Left lung (tissue), 14 donors: ENCODE measurements at regions of chr14 and their contacts with region 1.

Region 1: DNA sequence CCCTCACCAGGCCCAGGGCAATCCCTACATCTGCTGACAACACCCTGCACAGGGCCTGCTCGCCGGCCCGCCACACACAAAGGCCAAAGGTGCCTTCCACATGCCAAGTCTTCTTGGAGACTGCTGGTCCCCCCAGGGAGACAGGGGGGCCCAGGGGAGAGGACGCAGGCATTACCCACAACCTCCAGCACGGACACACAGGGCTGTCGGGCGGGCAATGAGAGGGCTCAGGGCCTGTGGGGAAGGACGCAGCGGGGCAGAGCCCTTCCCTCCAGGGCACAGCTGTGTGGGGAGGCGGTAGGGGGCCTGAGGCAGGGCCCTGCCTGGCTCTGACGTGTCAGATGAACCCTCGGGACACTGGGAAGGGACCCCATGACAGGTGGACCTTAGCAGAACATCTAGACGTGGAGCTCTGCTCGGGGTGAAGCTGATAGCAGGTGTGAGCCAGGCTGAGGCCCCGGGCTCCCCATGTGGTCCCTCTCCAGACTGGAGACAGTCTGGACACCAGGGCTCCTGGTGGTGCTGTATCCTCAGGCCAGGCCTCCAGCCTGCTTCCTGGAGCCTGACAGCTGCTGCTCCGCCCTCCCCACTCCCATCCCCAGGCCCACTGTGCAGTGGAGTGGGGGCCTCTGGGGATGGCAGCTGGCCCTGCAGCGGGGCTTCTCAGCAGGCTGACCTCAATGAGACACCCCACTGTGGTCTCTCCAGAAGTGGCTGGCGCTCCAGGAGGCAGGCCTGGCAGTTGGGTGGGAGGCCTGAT is 31.6 kb upstream of the NUDT14 start:
- DNase-seq: no peak
- ATAC-seq: no peak
- H3K4me3 ChIP-seq: no peak overlapping the region
- H3K27ac ChIP-seq: no peak overlapping the region
- H3K4me1 ChIP-seq: no peaks in the 10 kb centered on the region
- H3K27me3 ChIP-seq: no peaks in the 10 kb centered on the region
- CTCF ChIP-seq: no peak

Region 2: DNA sequence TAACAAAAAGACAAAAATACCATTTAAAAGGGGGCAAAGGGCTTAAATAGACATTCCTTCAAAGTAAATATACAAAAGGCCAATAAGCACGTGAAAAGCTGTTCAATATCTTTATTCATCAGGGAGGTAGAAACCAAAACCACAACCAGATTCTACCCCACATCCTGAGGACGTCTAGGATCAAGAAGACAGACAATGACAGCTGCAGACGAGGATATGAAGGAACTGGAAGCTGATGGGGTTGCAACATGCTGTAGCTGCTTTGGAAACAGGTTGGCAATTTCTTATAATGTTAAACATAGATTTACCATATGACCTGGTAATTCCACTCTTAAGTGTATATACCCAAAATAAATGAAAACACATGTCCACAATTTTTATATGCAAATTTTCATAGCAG is 718.2 kb before region 1 on chr14:
- intact Hi-C with region 1: no loop called
- DNase-seq: no peak
- ATAC-seq: no peak
- H3K4me3 ChIP-seq: no peak overlapping the region
- H3K27ac ChIP-seq: no peak overlapping the region
- H3K4me1 ChIP-seq: no peaks in the 10 kb centered on the region
- H3K27me3 ChIP-seq: no peaks in the 10 kb centered on the region
- CTCF ChIP-seq: no peak

Region 3: DNA sequence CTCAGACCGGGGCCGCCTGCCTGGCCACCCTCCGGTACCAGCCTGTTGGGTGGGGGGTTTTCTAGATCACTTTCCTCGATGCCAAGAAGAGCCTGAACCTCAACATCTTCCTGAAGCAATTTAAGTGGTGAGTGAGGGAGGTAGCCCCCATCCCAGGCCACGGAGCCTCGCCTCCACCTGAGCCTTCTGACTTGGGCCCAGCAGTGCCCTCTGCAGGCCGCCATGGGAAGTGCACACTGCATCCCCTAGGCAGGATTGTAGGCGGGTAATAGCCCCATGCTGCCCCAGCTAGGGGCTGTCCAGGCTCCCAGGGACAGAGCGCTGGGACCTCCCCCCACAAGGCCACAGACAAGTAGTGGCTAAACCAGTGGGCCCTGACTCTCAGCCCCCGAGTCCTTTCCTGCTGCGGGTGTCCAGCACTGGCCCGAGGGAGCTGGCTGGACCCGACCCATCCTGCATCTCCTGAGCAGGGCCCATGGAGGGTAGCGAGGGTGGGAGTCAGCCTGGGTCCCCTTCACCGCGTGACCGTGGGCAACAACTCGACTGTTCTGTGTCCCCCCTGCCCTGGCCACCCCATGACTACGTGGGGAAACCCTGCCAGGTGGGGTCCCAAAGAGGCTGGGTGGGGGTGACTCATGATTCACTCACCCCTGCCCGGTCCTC is 504.0 kb before region 1 on chr14:
- intact Hi-C with region 1: no loop called
- DNase-seq: peak in 1 of 4 donors; percentile 69
- ATAC-seq: peak; percentile 85
- H3K4me3 ChIP-seq: no peak overlapping the region
- H3K27ac ChIP-seq: no peak overlapping the region
- H3K4me1 ChIP-seq: no peaks in the 10 kb centered on the region
- H3K27me3 ChIP-seq: no peaks in the 10 kb centered on the region
- CTCF ChIP-seq: peak; percentile 94 to 98

Region 4: DNA sequence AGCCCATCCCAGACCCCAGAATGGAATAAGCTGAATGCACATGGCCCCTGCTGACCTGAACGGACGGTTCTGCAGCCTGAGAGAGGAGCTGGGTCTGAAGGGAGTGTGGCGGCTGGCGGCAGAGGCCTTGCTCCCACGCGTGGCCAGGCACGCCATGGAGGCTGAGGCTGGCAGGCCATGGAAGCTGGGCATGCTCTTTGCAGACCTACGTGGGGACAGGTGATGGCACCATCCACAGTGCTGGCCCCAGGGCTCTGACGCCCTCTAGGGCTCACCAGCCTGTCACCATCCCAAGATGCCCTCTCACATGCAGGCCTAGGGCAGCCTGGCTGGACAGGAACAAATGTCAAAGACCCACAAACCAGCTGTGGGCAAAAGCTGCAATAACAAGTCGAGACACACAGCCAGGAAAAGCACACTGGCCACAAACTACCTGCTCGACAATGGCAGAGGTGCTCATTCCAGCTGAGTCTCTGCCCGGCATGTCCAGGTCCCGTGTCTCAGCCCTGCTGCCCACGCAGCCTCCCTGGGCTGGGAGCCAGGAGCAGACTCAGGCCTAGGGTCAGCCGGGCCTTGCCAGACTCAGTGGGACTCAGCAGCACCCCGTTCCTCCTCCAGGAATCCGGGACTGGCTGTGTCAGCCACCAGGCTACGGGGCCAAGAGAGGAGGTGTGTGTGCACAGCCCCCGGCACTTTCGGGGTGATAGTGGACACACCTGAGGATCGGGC is 55.3 kb after region 1 on chr14:
- intact Hi-C with region 1: loop called in 1 of 2 experiments (anchors 10 kb)
- DNase-seq: peak in 1 of 4 donors; percentile 64
- ATAC-seq: peak; percentile 37
- H3K4me3 ChIP-seq: no peak overlapping the region
- H3K27ac ChIP-seq: no peak overlapping the region
- H3K4me1 ChIP-seq: no peaks in the 10 kb centered on the region
- H3K27me3 ChIP-seq: no peaks in the 10 kb centered on the region
- CTCF ChIP-seq: no peak